ENCODE measurements at regions of chr2 and their contacts with region 1.

Region 1: DNA sequence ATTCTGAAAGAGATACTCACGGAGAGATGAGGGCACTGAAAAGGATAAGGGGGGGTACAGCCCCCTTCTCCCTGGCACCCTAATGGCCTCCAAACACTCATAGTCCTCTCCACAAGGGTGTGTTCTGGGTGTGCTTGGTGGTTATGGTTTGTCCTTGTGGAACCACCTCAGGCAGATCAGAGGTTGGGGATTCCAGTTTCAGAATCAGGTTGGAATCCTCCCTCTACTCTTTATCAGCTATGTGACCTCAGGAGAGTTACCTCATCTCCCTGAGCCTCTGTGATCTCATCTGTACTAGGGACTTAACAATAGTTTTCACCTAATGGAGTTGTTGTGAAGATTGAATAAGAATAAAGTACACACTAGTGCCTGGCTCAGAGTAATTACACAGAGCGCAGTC is 95.7 kb downstream of the GPR39 start:
- DNase-seq: no peak
- ATAC-seq: no peak
- H3K4me3 ChIP-seq: no peak overlapping the region
- H3K4me3 Mint-ChIP-seq: no peak overlapping the region
- H3K27ac ChIP-seq: no peak overlapping the region
- H3K27ac Mint-ChIP-seq: no peak overlapping the region
- H3K4me1 ChIP-seq: no peaks in the 10 kb centered on the region
- H3K4me1 Mint-ChIP-seq: no peaks in the 10 kb centered on the region
- H3K27me3 ChIP-seq: no peaks in the 10 kb centered on the region
- H3K27me3 Mint-ChIP-seq: no peaks in the 10 kb centered on the region
- CTCF ChIP-seq: no peak

Region 2: DNA sequence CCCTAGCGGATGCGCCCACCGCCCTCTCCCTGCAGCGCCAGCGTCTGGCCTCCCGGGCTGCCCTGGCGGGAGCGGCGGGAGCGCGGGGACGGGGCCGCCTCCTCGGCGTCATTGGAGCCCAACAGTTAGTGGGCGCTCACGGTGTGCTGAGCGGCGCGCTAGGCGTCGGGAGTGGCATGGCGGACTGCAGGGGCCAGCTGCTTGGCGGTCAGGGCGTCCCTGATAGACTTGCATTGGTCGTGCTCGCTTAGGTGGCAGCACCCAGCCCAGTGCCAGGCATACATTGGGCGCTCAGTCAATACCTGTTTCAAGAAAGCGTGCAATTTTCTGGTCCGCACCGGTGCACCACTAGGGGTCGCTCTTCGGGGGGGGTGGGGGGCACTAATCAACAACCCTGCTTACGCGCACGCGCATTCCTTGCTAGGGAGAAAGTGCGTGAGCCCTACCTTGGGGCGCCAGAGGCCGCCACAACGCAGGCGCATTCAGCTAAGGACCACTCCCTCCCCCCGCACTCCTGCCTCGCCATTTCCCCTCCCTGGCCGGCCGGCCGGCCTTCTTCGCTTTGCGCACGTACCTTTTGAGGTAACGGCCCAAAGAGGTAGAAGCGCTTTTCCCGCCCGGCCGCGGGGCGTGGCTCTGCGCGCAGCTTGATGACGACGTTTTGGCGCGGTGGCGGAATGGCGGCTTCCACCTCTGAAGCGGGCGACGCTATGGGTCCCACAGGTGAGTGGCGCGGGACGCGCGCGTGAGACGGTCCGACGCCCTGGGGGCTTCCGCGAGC is 1019.7 kb before region 1 on chr2:
- CTCF ChIA-PET with region 1: no interaction called
- POLR2A ChIA-PET with region 1: no interaction called
- intact Hi-C with region 1: no loop called
- DNase-seq: peak; percentile 86 to 98 (median 93)
- ATAC-seq: peak; percentile 73
- H3K4me3 ChIP-seq: peak overlapping the region; percentile 86 to 87
- H3K4me3 Mint-ChIP-seq: peak overlapping the region; percentile 95
- H3K27ac ChIP-seq: peak overlapping the region; percentile 95 to 97
- H3K27ac Mint-ChIP-seq: peak overlapping the region; percentile 98
- H3K4me1 ChIP-seq: peaks cover 19% of the 10 kb centered on the region
- H3K4me1 Mint-ChIP-seq: peaks cover 49% of the 10 kb centered on the region
- H3K27me3 ChIP-seq: no peaks in the 10 kb centered on the region
- H3K27me3 Mint-ChIP-seq: no peaks in the 10 kb centered on the region
- CTCF ChIP-seq: peak; percentile 88

Region 3: GRCh38 chr2:132586101-132586511 is 73.8 kb after region 1 on chr2:
- CTCF ChIA-PET with region 1: no interaction called
- POLR2A ChIA-PET with region 1: no interaction called
- intact Hi-C with region 1: loop called in 1 of 2 experiments (anchors 2 kb)
- DNase-seq: no peak
- ATAC-seq: no peak
- H3K4me3 ChIP-seq: no peak overlapping the region
- H3K4me3 Mint-ChIP-seq: no peak overlapping the region
- H3K27ac ChIP-seq: no peak overlapping the region
- H3K27ac Mint-ChIP-seq: no peak overlapping the region
- H3K4me1 ChIP-seq: no peaks in the 10 kb centered on the region
- H3K4me1 Mint-ChIP-seq: no peaks in the 10 kb centered on the region
- H3K27me3 ChIP-seq: no peaks in the 10 kb centered on the region
- H3K27me3 Mint-ChIP-seq: peaks cover 2% of the 10 kb centered on the region
- CTCF ChIP-seq: no peak